ENCODE measurements at regions of chr1 and their contacts with region 1.

Region 1: DNA sequence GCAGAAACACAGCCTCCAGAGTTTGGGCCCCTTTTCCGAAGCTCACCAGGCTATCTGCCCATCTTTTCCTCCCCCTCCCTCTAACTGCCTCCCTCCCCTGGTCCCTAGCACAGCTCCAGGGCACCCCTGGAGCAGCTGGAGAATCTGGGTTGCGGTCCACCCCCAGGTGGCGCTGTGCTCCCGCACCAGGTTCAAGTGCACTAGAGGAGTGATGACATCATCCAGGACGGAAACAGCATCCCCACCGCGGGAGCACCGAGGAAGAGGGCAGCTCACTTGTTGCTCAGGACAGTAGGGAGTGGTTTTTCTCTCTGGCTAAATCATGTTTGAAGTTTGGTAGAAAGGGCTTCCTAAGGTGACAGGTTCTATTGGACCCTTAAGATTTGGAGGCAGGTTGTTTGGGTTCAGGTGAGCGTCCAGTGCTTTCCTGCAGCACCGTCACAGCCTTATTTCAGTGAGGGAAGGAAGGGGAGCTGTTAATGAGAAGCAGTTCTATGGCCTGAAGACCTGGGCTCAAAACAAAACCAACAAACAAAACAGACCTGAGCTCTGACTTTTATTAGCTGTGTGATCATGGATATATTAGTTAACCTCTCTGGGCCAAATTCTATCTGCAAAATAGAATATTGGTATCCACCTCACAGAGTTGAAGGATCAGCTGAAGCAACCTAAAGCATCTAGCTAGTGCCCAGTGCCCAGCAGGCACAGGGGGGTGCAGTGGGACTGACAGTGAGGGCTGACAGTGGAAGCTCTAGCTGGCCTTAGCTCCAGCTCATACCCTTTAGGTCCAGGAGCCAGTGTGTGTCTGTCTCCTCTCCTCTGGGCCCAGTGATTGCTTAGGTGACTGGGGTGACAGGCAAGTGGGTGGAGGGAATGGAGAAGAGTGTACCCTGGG is 7.5 kb downstream of the SHISA4 start:
- DNase-seq: peak; percentile 86 to 98
- H3K4me3 ChIP-seq: no peak overlapping the region
- H3K27ac ChIP-seq: no peak overlapping the region
- H3K4me1 ChIP-seq: peaks cover 6 to 21% (median 16%) of the 10 kb centered on the region in 4 experiments
- H3K27me3 ChIP-seq: no peaks in the 10 kb centered on the region
- CTCF ChIP-seq: peak; percentile 95 to 98 (median 96)
- EP300 ChIP-seq: peak in 1 of 2 experiments; percentile 59; a peak in 1 of 3 replicates
- POLR2A ChIP-seq: no peak
- RAD21 ChIP-seq: peak; percentile 98 to 99

Region 2: DNA sequence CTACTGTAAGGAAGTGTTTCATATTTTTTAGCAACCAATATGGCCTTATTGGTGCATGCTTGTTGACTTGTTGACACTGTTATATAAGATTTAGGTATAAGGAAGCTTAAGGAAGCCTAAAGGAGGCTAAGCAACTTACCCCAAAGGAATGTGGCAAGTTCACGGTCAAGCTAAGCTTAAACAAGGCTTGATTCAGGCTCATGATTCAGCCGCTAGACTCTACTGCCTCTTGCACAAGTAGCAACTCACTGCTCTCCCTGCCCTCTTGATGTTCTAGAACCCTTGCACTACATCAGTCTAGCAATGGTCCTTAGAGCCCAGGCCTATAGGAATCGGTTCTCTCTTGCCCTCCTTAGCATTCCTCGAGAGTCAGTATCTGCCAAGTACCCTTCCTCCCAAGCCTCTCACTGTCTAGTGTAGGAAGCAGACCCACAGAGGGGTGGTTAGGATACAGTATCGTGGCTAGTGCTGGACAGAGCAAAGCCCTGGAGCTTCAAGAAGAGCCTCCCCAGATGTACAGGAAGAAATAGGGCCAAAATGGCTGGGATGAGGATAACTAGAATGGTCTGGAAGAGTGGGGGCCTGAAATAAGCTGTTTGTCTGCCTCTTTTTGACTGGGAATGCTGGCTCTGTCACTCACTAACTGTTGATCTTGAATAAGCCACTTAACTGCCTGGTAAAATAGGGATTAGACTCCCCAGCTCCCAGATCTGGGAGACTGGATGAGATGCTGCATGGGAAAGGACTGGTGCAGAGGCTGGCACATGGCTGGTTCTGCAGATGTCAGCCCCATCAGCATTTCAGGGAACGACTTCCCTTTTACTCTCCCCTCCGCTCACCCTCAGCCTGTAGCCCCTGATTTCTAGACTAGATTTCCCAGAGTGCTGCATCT is 235.0 kb before region 1 on chr1:
- CTCF ChIA-PET with region 1: no interaction called
- POLR2A ChIA-PET with region 1: no interaction called
- DNase-seq: no peak
- H3K4me3 ChIP-seq: no peak overlapping the region
- H3K27ac ChIP-seq: no peak overlapping the region
- H3K4me1 ChIP-seq: no peaks in the 10 kb centered on the region; a peak in 1 of 7 replicates
- H3K27me3 ChIP-seq: no peaks in the 10 kb centered on the region
- CTCF ChIP-seq: no peak
- EP300 ChIP-seq: no peak
- POLR2A ChIP-seq: no peak
- RAD21 ChIP-seq: no peak

Region 3: DNA sequence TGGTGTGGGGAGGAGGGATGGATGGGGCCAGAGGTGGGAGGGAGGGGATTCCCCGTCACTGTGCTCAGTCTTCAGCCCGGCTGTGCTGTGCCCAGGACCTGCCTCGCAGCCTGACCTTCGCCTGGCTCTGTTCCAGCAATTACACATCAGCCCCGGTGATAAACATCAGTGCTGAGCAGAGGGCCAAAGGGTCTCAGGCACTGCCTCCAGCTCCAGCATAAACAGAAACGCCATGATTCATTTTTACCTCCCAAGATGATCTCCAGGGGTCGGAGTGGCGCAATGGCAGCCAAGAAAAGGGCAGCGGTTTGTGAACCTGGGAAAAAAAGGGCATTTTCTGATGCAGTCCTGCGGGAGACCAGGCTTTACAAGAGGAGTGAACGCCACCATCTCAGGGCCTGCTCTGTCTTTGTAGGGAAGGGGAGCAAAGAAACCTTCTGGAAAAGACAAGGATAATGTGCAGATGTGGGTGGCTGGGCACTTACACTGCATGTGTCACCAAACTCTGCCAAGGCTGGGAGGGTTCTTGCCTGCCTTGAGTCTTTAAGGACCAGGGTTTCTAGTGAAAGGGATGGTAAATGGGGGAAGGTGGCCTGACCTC is 20.6 kb after region 1 on chr1:
- CTCF ChIA-PET with region 1: interaction called, 147 read pairs
- POLR2A ChIA-PET with region 1: no interaction called
- DNase-seq: no peak
- H3K4me3 ChIP-seq: no peak overlapping the region
- H3K27ac ChIP-seq: no peak overlapping the region
- H3K4me1 ChIP-seq: peaks cover 0 to 3% (median 1%) of the 10 kb centered on the region in 4 experiments; a peak in 5 of 7 replicates
- H3K27me3 ChIP-seq: no peaks in the 10 kb centered on the region
- CTCF ChIP-seq: no peak
- EP300 ChIP-seq: no peak
- POLR2A ChIP-seq: no peak
- RAD21 ChIP-seq: no peak

Region 4: GRCh38 chr1:201946224-201946908 is 50.2 kb after region 1 on chr1 and contains the start of gene LMOD1:
- CTCF ChIA-PET with region 1: interaction called, 145 read pairs
- POLR2A ChIA-PET with region 1: interaction called, 22 read pairs
- DNase-seq: peak; percentile 74 to 84
- H3K4me3 ChIP-seq: peak within 1 kb of the TSS; percentile 48 to 64 (median 58); a peak in 7 of 8 replicates
- H3K27ac ChIP-seq: no peak within 1 kb of the TSS
- H3K4me1 ChIP-seq: peaks cover 7 to 19% (median 10%) of the 10 kb centered on the region in 4 experiments
- H3K27me3 ChIP-seq: peaks cover 0 to 15% (median 13%) of the 10 kb centered on the region in 4 experiments; a peak in 6 of 7 replicates
- CTCF ChIP-seq: no peak
- EP300 ChIP-seq: no peak
- POLR2A ChIP-seq: no peak
- RAD21 ChIP-seq: no peak
- total RNA-seq, gene LMOD1: 0.82 and 1.4 TPM in 2 replicates

Region 5: GRCh38 chr1:201970334-201971159 is 74.4 kb after region 1 on chr1:
- CTCF ChIA-PET with region 1: interaction called, 85 read pairs
- POLR2A ChIA-PET with region 1: interaction called, 11 read pairs
- DNase-seq: no peak
- H3K4me3 ChIP-seq: no peak overlapping the region
- H3K27ac ChIP-seq: no peak overlapping the region
- H3K4me1 ChIP-seq: no peaks in the 10 kb centered on the region
- H3K27me3 ChIP-seq: no peaks in the 10 kb centered on the region
- CTCF ChIP-seq: no peak
- EP300 ChIP-seq: no peak
- POLR2A ChIP-seq: no peak
- RAD21 ChIP-seq: no peak

Region 6: GRCh38 chr1:202009326-202010179 is 113.4 kb after region 1 on chr1:
- CTCF ChIA-PET with region 1: interaction called, 10 read pairs
- POLR2A ChIA-PET with region 1: interaction called, 5 read pairs
- DNase-seq: peak; percentile 38 to 87
- H3K4me3 ChIP-seq: peak overlapping the region in 3 of 4 experiments; percentile 17 to 72 (median 30); a peak in 6 of 8 replicates
- H3K27ac ChIP-seq: peak overlapping the region; percentile 78
- H3K4me1 ChIP-seq: peaks cover 12 to 39% (median 31%) of the 10 kb centered on the region in 4 experiments
- H3K27me3 ChIP-seq: no peaks in the 10 kb centered on the region
- CTCF ChIP-seq: peak in 2 of 3 experiments; percentile 73 to 82; a peak in 3 of 4 replicates
- EP300 ChIP-seq: no peak
- POLR2A ChIP-seq: no peak
- RAD21 ChIP-seq: peak; percentile 80 to 90

Measured in H1 (cell line).